ENCODE measurements at regions of chr3 and their contacts with region 1.

Region 1: GRCh38 chr3:172673210-172673679 is 37.6 kb downstream of the NCEH1 start:
- DNase-seq: peak in 1 of 2 experiments; percentile 78
- H3K4me3 ChIP-seq: no peak overlapping the region
- H3K27ac ChIP-seq: no peak overlapping the region
- H3K4me1 ChIP-seq: peaks cover 2 to 14% (median 10%) of the 10 kb centered on the region in 4 experiments; a peak in 5 of 7 replicates
- H3K27me3 ChIP-seq: no peaks in the 10 kb centered on the region
- CTCF ChIP-seq: peak; percentile 33 to 76 (median 72)
- EP300 ChIP-seq: no peak
- POLR2A ChIP-seq: no peak
- RAD21 ChIP-seq: peak; percentile 74 to 79

Region 2: GRCh38 chr3:172577962-172578570 is 95.2 kb before region 1 on chr3:
- CTCF ChIA-PET with region 1: no interaction called
- POLR2A ChIA-PET with region 1: no interaction called
- DNase-seq: no peak
- H3K4me3 ChIP-seq: no peak overlapping the region
- H3K27ac ChIP-seq: no peak overlapping the region
- H3K4me1 ChIP-seq: no peaks in the 10 kb centered on the region
- H3K27me3 ChIP-seq: no peaks in the 10 kb centered on the region
- CTCF ChIP-seq: no peak
- EP300 ChIP-seq: no peak
- POLR2A ChIP-seq: no peak
- RAD21 ChIP-seq: no peak

Region 3: GRCh38 chr3:172648747-172649146 is 24.5 kb before region 1 on chr3:
- CTCF ChIA-PET with region 1: interaction called, 25 read pairs
- POLR2A ChIA-PET with region 1: no interaction called
- DNase-seq: no peak
- H3K4me3 ChIP-seq: no peak overlapping the region
- H3K27ac ChIP-seq: no peak overlapping the region
- H3K4me1 ChIP-seq: peaks cover 0 to 2% (median 2%) of the 10 kb centered on the region in 4 experiments; a peak in 2 of 7 replicates
- H3K27me3 ChIP-seq: no peaks in the 10 kb centered on the region
- CTCF ChIP-seq: no peak
- EP300 ChIP-seq: no peak
- POLR2A ChIP-seq: no peak
- RAD21 ChIP-seq: no peak

Region 4: DNA sequence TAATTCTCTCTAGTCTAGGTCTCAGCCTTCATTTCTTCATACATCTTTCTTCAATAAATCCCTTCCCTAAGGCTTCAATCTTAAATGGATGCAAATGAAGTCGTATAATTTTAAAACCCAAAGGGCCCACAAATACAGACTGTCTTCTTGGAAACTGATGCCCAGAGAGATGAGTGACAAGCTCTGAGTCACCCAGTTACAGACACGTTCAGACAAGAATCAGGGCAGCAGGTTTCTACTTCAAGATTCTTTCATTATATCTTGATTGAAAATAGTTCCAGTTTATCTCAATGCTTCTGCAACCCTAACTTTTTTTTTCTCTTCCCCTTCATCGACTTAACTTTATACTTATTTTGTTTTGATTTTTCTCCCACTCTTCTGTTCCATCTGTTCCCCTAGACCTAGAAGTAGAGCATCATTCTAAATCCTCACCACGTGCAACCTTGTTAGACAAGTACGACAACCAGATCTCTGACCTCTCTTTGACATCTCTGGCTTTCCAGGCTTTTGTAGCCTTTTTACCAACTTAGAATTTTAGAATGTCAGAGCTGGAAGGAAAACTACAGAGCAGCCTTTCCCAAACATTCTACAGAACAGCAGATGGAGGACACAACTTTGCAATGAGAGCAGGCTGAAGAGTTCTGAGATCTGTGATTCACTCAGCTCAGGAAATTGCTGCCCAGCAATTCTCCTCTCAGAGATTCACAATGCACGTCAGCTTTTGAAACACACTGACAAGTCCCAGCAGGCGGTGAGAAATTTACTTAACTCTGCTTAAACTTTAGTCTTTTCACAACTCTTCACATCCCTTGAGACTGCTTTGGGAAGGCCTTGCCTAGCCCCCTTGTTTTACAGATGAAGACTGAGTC is 12.3 kb after region 1 on chr3:
- CTCF ChIA-PET with region 1: interaction called, 16 read pairs
- POLR2A ChIA-PET with region 1: no interaction called
- DNase-seq: no peak
- H3K4me3 ChIP-seq: no peak overlapping the region
- H3K27ac ChIP-seq: no peak overlapping the region
- H3K4me1 ChIP-seq: peaks cover 0 to 3% (median 0%) of the 10 kb centered on the region in 4 experiments; a peak in 1 of 7 replicates
- H3K27me3 ChIP-seq: no peaks in the 10 kb centered on the region
- CTCF ChIP-seq: no peak
- EP300 ChIP-seq: no peak
- POLR2A ChIP-seq: no peak
- RAD21 ChIP-seq: no peak

Region 5: GRCh38 chr3:172701751-172702150 is 28.5 kb after region 1 on chr3:
- CTCF ChIA-PET with region 1: interaction called, 15 read pairs
- POLR2A ChIA-PET with region 1: interaction called, 3 read pairs
- DNase-seq: no peak
- H3K4me3 ChIP-seq: no peak overlapping the region
- H3K27ac ChIP-seq: no peak overlapping the region
- H3K4me1 ChIP-seq: peaks cover 0 to 2% (median 0%) of the 10 kb centered on the region in 4 experiments; a peak in 1 of 7 replicates
- H3K27me3 ChIP-seq: no peaks in the 10 kb centered on the region
- CTCF ChIP-seq: no peak
- EP300 ChIP-seq: no peak
- POLR2A ChIP-seq: no peak
- RAD21 ChIP-seq: no peak

Region 6: GRCh38 chr3:172726382-172726781 is 53.1 kb after region 1 on chr3:
- CTCF ChIA-PET with region 1: interaction called, 10 read pairs
- POLR2A ChIA-PET with region 1: no interaction called
- DNase-seq: no peak
- H3K4me3 ChIP-seq: no peak overlapping the region
- H3K27ac ChIP-seq: no peak overlapping the region
- H3K4me1 ChIP-seq: no peaks in the 10 kb centered on the region
- H3K27me3 ChIP-seq: no peaks in the 10 kb centered on the region; a peak in 1 of 7 replicates
- CTCF ChIP-seq: no peak
- EP300 ChIP-seq: no peak
- POLR2A ChIP-seq: no peak
- RAD21 ChIP-seq: no peak

Region 7: DNA sequence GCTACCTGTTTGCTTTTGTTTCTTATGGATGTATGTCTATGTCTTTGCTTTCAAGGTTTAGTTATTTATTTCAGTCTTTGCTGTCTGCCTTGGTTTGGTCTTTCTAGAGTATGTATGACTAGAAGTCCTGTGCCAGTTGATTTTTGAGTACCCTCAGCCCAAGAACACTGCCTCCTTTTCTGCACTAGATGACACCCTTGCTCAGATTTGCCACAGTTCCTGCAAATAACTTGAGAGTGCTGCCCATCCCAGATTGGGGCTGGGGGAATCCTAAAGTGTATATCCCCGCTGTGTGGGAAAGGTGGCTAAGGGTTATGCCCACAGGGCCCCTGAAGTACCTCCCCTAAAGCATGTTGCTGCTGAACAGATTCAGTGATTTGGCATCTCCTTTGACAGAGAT is 756.3 kb after region 1 on chr3:
- CTCF ChIA-PET with region 1: no interaction called
- POLR2A ChIA-PET with region 1: no interaction called
- DNase-seq: no peak
- H3K4me3 ChIP-seq: no peak overlapping the region
- H3K27ac ChIP-seq: no peak overlapping the region
- H3K4me1 ChIP-seq: no peaks in the 10 kb centered on the region
- H3K27me3 ChIP-seq: no peaks in the 10 kb centered on the region
- CTCF ChIP-seq: peak in 1 of 3 experiments; percentile 8; a peak in 1 of 4 replicates
- EP300 ChIP-seq: no peak
- POLR2A ChIP-seq: no peak
- RAD21 ChIP-seq: peak; percentile 52 to 53

Measured in H1 (cell line).